CD8-positive, alpha-beta T cell (primary cell): ENCODE measurements at regions of chr13 and their contacts with region 1.

Region 1: DNA sequence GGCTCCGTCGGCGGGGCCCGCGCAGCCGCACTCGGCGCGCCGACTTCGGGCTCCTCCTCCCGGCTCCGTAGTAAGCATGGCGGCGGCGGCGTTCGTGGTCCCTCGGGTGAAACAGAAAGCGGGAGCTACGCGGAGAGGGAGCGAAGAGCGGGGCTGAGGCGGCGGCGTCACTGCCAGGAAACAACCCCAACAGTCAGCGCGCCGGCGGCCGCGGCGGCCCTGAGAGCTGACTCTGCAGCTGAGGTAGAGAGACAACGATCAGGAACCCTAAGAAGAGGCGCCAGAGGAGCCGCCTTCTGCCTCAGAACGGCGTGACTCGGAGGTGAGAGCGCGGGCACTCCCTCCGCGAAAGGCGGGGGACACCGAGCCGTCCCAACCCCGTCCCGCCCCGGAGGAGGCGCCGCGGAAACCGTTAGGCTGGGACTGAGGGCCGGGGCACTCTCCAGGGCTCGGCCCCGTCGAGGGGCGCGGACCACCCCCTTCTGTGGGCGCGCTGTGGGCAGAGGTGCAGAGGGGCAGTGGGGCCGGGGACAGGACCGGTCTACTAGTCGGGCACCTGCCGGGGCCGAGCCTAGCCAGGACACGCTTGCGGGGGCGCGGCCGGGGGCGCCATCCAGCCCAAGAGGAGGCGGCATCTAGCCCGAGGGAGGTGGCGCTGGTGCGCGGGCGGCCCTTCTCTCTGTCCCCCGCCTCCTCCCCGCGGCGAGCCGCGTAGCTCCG is at the start of gene FNDC3A:
- DNase-seq: peak; percentile 70 to 93 (median 83)
- ATAC-seq: peak; percentile 70
- H3K4me3 ChIP-seq: peak within 1 kb of the TSS; percentile 79 to 80
- H3K4me3 Mint-ChIP-seq: peak within 1 kb of the TSS; percentile 97
- H3K27ac ChIP-seq: peak within 1 kb of the TSS; percentile 79 to 91
- H3K27ac Mint-ChIP-seq: peak within 1 kb of the TSS; percentile 99
- H3K4me1 ChIP-seq: peaks cover 33% of the 10 kb centered on the region
- H3K4me1 Mint-ChIP-seq: peaks cover 42% of the 10 kb centered on the region
- H3K27me3 ChIP-seq: no peaks in the 10 kb centered on the region
- H3K27me3 Mint-ChIP-seq: no peaks in the 10 kb centered on the region
- CTCF ChIP-seq: no peak
- total RNA-seq, gene FNDC3A: 27.0 to 27.7 TPM

Region 2: GRCh38 chr13:48037346-48038173 is 938.5 kb before region 1 on chr13 and contains the start of gene NUDT15:
- CTCF ChIA-PET with region 1: no interaction called
- POLR2A ChIA-PET with region 1: interaction called, 6 read pairs
- intact Hi-C with region 1: loop called in 1 of 2 experiments (anchors 2 kb)
- DNase-seq: peak; percentile 88 to 99 (median 97)
- ATAC-seq: peak; percentile 90
- H3K4me3 ChIP-seq: peak within 1 kb of the TSS; percentile 81 to 96
- H3K4me3 Mint-ChIP-seq: peak within 1 kb of the TSS; percentile 97
- H3K27ac ChIP-seq: peak within 1 kb of the TSS; percentile 99
- H3K27ac Mint-ChIP-seq: peak within 1 kb of the TSS; percentile 98
- H3K4me1 ChIP-seq: peaks cover 20% of the 10 kb centered on the region
- H3K4me1 Mint-ChIP-seq: peaks cover 32% of the 10 kb centered on the region
- H3K27me3 ChIP-seq: no peaks in the 10 kb centered on the region
- H3K27me3 Mint-ChIP-seq: no peaks in the 10 kb centered on the region
- CTCF ChIP-seq: peak; percentile 99
- total RNA-seq, gene NUDT15: 23.8 to 24.9 TPM

Region 3: GRCh38 chr13:48695776-48696175 is 280.2 kb before region 1 on chr13:
- CTCF ChIA-PET with region 1: no interaction called
- POLR2A ChIA-PET with region 1: no interaction called
- intact Hi-C with region 1: no loop called
- DNase-seq: no peak
- ATAC-seq: no peak
- H3K4me3 ChIP-seq: no peak overlapping the region
- H3K4me3 Mint-ChIP-seq: no peak overlapping the region
- H3K27ac ChIP-seq: no peak overlapping the region
- H3K27ac Mint-ChIP-seq: no peak overlapping the region
- H3K4me1 ChIP-seq: no peaks in the 10 kb centered on the region
- H3K4me1 Mint-ChIP-seq: no peaks in the 10 kb centered on the region
- H3K27me3 ChIP-seq: no peaks in the 10 kb centered on the region
- H3K27me3 Mint-ChIP-seq: no peaks in the 10 kb centered on the region
- CTCF ChIP-seq: no peak

Region 4: DNA sequence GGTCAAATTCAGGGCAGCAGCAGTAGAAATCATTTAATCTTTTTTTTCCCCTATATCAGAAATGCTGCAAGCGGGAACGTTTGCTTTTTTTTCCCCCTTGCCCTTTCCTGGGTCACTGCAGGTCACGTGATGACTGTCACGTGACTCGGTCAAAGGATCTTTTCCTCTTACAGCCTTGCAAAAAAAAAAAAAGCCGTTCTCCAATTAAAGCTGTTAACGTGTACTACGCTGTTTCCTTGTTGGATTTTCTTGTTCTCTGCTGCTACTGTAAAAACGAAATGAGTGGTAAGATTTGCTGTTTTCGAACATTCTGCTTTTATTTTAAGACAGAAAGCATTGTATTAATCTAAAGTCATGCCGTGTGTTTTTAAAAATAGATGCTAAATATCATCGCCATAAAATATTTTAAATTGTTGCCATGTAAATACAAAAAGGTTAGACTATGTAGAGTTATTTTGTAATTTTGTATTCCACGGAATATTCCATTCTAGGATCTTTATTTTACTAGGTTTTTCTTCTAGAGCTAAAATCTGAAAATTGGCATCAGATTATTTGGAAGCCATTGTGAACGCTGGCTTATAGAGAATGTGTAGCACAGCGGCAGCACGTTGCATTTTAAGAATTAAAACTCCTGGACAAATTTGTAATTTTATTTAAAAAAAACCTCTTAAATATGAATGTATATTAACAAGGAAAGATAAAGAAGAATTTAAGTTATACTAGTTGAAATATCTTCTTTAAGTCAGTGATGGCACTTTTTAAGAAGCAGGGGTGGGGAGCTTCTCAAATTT is 134.3 kb after region 1 on chr13:
- CTCF ChIA-PET with region 1: no interaction called
- POLR2A ChIA-PET with region 1: interaction called, 7 read pairs
- intact Hi-C with region 1: loop called (anchors 1 kb)
- DNase-seq: peak; percentile 26 to 94 (median 76)
- ATAC-seq: peak; percentile 73
- H3K4me3 ChIP-seq: peak overlapping the region; percentile 62 to 78
- H3K4me3 Mint-ChIP-seq: peak overlapping the region; percentile 87
- H3K27ac ChIP-seq: peak overlapping the region; percentile 56 to 65
- H3K27ac Mint-ChIP-seq: peak overlapping the region; percentile 85
- H3K4me1 ChIP-seq: peaks cover 42% of the 10 kb centered on the region
- H3K4me1 Mint-ChIP-seq: peaks cover 49% of the 10 kb centered on the region
- H3K27me3 ChIP-seq: no peaks in the 10 kb centered on the region
- H3K27me3 Mint-ChIP-seq: no peaks in the 10 kb centered on the region
- CTCF ChIP-seq: no peak

Region 5: GRCh38 chr13:49256841-49257240 is 280.8 kb after region 1 on chr13:
- CTCF ChIA-PET with region 1: no interaction called
- POLR2A ChIA-PET with region 1: no interaction called
- intact Hi-C with region 1: loop called in 1 of 2 experiments (anchors 5 kb)
- DNase-seq: no peak
- ATAC-seq: no peak
- H3K4me3 ChIP-seq: no peak overlapping the region
- H3K4me3 Mint-ChIP-seq: no peak overlapping the region
- H3K27ac ChIP-seq: no peak overlapping the region
- H3K27ac Mint-ChIP-seq: peak overlapping the region; percentile 53
- H3K4me1 ChIP-seq: peaks cover 8% of the 10 kb centered on the region
- H3K4me1 Mint-ChIP-seq: peaks cover 44% of the 10 kb centered on the region
- H3K27me3 ChIP-seq: no peaks in the 10 kb centered on the region
- H3K27me3 Mint-ChIP-seq: no peaks in the 10 kb centered on the region
- CTCF ChIP-seq: no peak

Region 6: GRCh38 chr13:49585220-49586157 is 609.5 kb after region 1 on chr13 and contains the start of gene RCBTB1:
- CTCF ChIA-PET with region 1: no interaction called
- POLR2A ChIA-PET with region 1: interaction called, 3 read pairs
- intact Hi-C with region 1: loop called in 1 of 2 experiments (anchors 5 kb)
- DNase-seq: peak; percentile 33 to 88 (median 68)
- ATAC-seq: peak; percentile 88
- H3K4me3 ChIP-seq: peak within 1 kb of the TSS; percentile 89 to 97
- H3K4me3 Mint-ChIP-seq: peak within 1 kb of the TSS; percentile 90
- H3K27ac ChIP-seq: peak within 1 kb of the TSS; percentile 71 to 86
- H3K27ac Mint-ChIP-seq: peak within 1 kb of the TSS; percentile 92
- H3K4me1 ChIP-seq: peaks cover 9% of the 10 kb centered on the region
- H3K4me1 Mint-ChIP-seq: peaks cover 36% of the 10 kb centered on the region
- H3K27me3 ChIP-seq: no peaks in the 10 kb centered on the region
- H3K27me3 Mint-ChIP-seq: no peaks in the 10 kb centered on the region
- CTCF ChIP-seq: no peak
- total RNA-seq, gene RCBTB1: 12.1 to 14.2 TPM